ENCODE measurements at regions of chr9 and their contacts with region 1.

Region 1: GRCh38 chr9:15606643-15607472 is 54.0 kb downstream of the CCDC171 start:
- DNase-seq: no peak
- H3K4me3 Mint-ChIP-seq: no peak overlapping the region
- H3K27ac Mint-ChIP-seq: no peak overlapping the region
- H3K4me1 Mint-ChIP-seq: no peaks in the 10 kb centered on the region
- H3K27me3 Mint-ChIP-seq: no peaks in the 10 kb centered on the region

Region 2: DNA sequence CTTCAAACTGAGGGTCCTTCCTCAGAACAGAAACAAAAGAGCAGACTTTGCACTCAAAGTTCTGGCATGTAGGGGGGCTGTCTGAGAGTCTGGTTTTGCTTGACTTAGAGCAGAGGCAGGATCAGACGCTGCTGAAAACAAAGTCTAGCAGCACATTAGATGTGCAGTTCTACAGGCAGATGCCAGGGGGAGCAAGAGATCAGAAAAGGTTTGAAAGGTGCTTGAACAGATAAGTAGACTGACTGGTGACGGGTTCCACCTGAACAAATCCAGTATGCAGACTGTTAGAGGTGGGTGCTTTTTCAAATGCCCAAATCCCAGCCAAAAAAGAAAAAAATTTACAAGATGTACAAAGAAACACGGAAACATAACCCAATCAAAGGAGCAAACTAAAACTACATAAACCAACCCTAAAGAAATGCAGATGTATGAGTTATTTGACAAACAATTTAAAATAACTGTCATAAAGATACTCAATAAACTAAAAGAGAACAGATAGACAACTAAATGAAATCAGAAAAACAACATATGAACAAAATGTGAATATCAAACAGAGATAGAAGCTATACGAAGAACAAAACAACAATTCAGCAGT is 501.9 kb before region 1 on chr9:
- CTCF ChIA-PET with region 1: no interaction called
- POLR2A ChIA-PET with region 1: no interaction called
- intact Hi-C with region 1: loop called (anchors 5 kb)
- DNase-seq: peak; percentile 34
- H3K4me3 Mint-ChIP-seq: no peak overlapping the region
- H3K27ac Mint-ChIP-seq: no peak overlapping the region
- H3K4me1 Mint-ChIP-seq: no peaks in the 10 kb centered on the region
- H3K27me3 Mint-ChIP-seq: peaks cover 11% of the 10 kb centered on the region

Region 3: GRCh38 chr9:15211160-15211814 is 395.6 kb before region 1 on chr9:
- CTCF ChIA-PET with region 1: interaction called, 7 read pairs
- POLR2A ChIA-PET with region 1: no interaction called
- intact Hi-C with region 1: loop called (anchors 2 kb)
- DNase-seq: peak; percentile 58
- H3K4me3 Mint-ChIP-seq: no peak overlapping the region
- H3K27ac Mint-ChIP-seq: no peak overlapping the region
- H3K4me1 Mint-ChIP-seq: peaks cover 8% of the 10 kb centered on the region
- H3K27me3 Mint-ChIP-seq: no peaks in the 10 kb centered on the region

Region 4: DNA sequence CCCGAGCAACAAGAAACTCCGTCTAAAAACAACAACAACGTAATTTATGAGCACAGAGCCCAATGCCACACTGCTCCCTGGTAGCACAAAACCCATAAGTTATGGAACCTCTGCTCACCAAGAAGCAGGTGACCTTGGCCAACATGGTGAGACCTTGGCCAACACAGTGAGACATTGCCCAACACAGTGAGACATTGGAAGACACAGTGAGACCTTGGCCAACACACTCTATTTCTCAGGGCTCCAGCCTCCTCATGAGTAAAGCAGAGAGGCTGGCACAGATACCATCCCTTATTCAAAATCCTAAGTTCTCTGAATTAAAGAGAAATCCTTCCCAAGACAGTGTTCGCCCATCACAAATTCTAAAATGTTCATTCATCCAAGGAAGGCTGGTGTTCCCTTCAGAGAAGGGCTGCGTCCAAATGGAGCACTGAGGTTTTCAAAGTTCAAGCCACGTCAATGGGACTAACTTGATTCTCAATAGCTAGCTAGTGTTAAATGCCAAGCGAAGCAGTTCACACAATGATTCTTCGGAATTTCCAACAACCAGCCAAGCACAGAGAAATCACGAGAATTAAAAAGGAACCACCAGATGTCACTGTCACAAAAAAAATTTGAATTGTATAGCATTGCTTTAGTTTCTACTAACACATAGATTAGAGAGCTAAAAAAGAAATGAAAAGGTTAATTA is 329.3 kb before region 1 on chr9:
- CTCF ChIA-PET with region 1: no interaction called
- POLR2A ChIA-PET with region 1: no interaction called
- intact Hi-C with region 1: loop called (anchors 10 kb)
- DNase-seq: no peak
- H3K4me3 Mint-ChIP-seq: no peak overlapping the region
- H3K27ac Mint-ChIP-seq: peak overlapping the region; percentile 51
- H3K4me1 Mint-ChIP-seq: peaks cover 27% of the 10 kb centered on the region
- H3K27me3 Mint-ChIP-seq: no peaks in the 10 kb centered on the region

Region 5: GRCh38 chr9:15357050-15357653 is 249.7 kb before region 1 on chr9:
- CTCF ChIA-PET with region 1: interaction called, 3 read pairs
- POLR2A ChIA-PET with region 1: no interaction called
- intact Hi-C with region 1: loop called (anchors 2 kb)
- DNase-seq: peak; percentile 16
- H3K4me3 Mint-ChIP-seq: no peak overlapping the region
- H3K27ac Mint-ChIP-seq: no peak overlapping the region
- H3K4me1 Mint-ChIP-seq: peaks cover 8% of the 10 kb centered on the region
- H3K27me3 Mint-ChIP-seq: no peaks in the 10 kb centered on the region

Region 6: GRCh38 chr9:15485836-15486666 is 120.8 kb before region 1 on chr9:
- CTCF ChIA-PET with region 1: interaction called, 3 read pairs
- POLR2A ChIA-PET with region 1: no interaction called
- intact Hi-C with region 1: loop called (anchors 10 kb)
- DNase-seq: no peak
- H3K4me3 Mint-ChIP-seq: no peak overlapping the region
- H3K27ac Mint-ChIP-seq: peak overlapping the region; percentile 49
- H3K4me1 Mint-ChIP-seq: peaks cover 37% of the 10 kb centered on the region
- H3K27me3 Mint-ChIP-seq: no peaks in the 10 kb centered on the region

Region 7: DNA sequence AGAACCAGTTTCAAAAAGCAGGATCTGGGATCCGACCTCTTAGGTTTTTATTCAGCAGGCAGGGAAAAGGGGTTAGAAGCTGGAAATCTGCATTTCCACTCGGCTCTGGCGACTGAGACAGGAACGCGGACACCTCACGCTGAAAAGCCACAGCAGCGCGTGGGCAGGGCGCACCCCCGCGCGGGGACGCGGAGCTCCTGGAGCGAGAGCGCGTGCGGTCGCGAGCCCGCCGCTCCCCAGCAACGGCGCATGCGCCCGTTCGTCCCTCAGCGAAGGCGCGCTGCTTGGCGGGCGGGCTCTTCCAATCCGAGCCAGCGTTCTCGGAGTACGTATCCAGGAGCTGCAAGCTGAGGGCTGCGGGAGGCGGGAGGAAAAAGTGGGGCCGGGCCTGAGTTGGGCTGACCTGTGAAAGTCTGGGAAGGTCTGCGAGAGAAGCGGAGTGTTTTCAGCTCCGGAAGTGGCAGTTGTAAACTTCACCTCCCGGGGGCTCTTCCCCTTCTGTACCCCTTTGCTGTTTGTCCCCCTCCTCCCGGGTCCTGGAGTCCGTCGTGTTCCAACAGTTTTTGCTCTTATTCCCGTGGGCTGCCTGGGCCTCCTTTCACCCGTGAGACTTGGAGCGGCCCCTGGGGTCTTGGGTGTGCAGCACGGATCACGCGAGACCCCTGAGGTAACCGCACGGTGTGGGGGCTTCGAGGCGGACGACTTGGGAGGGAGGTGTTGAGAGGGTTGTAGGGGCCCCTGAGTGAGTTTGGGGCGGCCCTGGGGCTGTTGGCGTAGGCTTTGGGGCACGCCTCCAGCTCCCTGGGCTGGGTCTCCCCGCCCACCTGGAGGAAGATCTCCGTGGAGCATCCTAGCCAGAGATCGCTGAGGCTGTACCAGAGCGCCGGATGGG is 54.0 kb before region 1 on chr9 and contains the start of gene CCDC171:
- CTCF ChIA-PET with region 1: interaction called, 30 read pairs
- POLR2A ChIA-PET with region 1: no interaction called
- intact Hi-C with region 1: loop called (anchors 1 kb)
- DNase-seq: peak; percentile 92
- H3K4me3 Mint-ChIP-seq: peak within 1 kb of the TSS; percentile 79
- H3K27ac Mint-ChIP-seq: peak within 1 kb of the TSS; percentile 61
- H3K4me1 Mint-ChIP-seq: peaks cover 11% of the 10 kb centered on the region
- H3K27me3 Mint-ChIP-seq: no peaks in the 10 kb centered on the region
- total RNA-seq, gene CCDC171: 2.5 to 2.7 TPM